ENCODE measurements at regions of chr10 and their contacts with region 1.

Region 1: DNA sequence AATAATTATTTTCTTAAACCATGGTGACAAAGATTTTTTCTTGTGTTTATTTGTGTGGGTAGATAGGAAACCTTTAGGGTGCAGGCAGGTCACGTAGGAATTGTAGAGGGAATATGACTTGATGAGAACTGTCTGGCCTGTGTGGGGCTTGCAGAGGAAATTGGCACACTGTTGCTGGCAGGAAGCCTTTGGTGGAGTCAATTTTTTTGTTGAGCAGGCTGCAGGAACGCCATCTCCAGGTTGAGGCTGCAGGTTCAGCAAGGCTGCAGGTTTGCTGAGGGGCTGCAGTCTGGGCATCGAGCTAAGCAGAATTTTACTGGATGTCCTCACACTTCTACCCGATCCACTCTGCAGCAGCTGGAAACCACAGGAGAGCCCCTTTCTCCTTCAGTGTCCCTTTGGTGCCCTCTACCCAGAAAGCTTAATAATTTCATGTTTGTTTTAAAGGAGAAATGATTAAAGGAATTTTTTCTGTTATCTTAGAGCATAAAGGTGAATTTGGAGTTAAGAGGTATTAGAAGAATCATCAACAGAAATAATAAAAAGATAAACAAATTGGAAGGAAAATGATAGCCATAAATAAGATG is 37.0 kb downstream of the TBC1D12 start:
- DNase-seq: no peak
- ATAC-seq: no peak
- H3K4me3 ChIP-seq: no peak overlapping the region
- H3K27ac ChIP-seq: no peak overlapping the region
- H3K4me1 ChIP-seq: peaks cover 6 to 13% of the 10 kb centered on the region in 2 donors
- H3K27me3 ChIP-seq: no peaks in the 10 kb centered on the region
- CTCF ChIP-seq: no peak
- POLR2A ChIP-seq: no peak

Region 2: GRCh38 chr10:94108200-94108599 is 331.2 kb before region 1 on chr10:
- in situ Hi-C with region 1: no loop called
- intact Hi-C with region 1: no loop called
- DNase-seq: no peak
- ATAC-seq: no peak
- H3K4me3 ChIP-seq: no peak overlapping the region
- H3K27ac ChIP-seq: no peak overlapping the region
- H3K4me1 ChIP-seq: peaks cover under 1 to 7% of the 10 kb centered on the region in 2 donors
- H3K27me3 ChIP-seq: no peaks in the 10 kb centered on the region
- CTCF ChIP-seq: no peak
- POLR2A ChIP-seq: no peak

Region 3: GRCh38 chr10:94279835-94280709 is 159.3 kb before region 1 on chr10:
- in situ Hi-C with region 1: no loop called
- intact Hi-C with region 1: loop called (anchors 10 kb)
- DNase-seq: no peak
- ATAC-seq: peak; percentile 47 to 82
- H3K4me3 ChIP-seq: no peak overlapping the region
- H3K27ac ChIP-seq: no peak overlapping the region
- H3K4me1 ChIP-seq: peaks cover 5 to 6% of the 10 kb centered on the region in 2 donors
- H3K27me3 ChIP-seq: no peaks in the 10 kb centered on the region
- CTCF ChIP-seq: peak; percentile 69 to 89 (median 72)
- POLR2A ChIP-seq: no peak

Region 4: DNA sequence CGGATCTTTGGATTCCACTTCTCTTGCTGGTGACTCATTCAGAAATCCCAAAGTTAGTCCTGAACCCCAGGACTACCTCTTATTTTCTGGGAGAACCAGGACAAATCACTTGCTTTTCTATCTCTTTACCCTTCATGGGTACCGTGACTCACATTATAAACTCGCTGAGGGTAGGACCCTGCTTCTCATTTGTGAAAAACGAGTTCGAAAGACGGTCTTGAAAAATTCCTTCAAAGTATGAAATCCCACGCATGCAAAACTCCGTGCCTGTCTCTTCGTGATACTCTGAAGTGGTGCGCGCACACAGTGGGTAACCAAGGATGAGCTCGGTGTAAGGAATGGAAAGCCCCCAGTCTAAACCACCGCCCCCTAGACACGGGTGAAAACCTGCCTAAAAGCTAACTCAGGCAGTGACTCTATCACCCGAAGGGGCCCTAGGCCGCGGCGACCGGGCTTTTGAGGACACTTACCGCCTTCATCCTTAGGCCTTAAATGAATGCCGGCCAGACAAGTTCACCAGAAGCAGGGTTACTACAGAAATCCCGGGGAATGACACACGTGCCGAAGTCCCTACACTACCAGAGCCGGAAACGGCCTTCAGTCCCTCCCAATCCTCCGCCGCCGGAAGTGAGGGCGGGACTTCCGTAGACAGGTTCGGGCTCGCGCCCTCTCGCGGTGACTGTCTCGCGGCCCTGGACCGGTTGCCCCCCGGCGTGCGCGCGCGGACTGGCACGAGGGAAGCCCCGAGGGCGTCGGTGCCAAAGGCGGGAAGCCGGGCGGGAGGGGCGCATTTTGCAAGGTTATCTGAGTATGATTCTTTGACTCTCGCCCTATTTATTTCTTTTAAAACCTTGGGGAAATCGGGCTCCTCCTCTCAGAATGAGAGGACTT is 76.8 kb before region 1 on chr10 and contains the start of gene NOC3L:
- in situ Hi-C with region 1: loop called in 1 of 4 experiments (anchors 10 kb)
- intact Hi-C with region 1: loop called (anchors 1 kb)
- DNase-seq: peak; percentile 86 to 92
- ATAC-seq: peak; percentile 98 to 99
- H3K4me3 ChIP-seq: peak within 1 kb of the TSS; percentile 60 to 88 (median 78)
- H3K27ac ChIP-seq: peak within 1 kb of the TSS; percentile 72 to 85 (median 78)
- H3K4me1 ChIP-seq: peaks cover 16 to 17% of the 10 kb centered on the region in 2 donors
- H3K27me3 ChIP-seq: no peaks in the 10 kb centered on the region
- CTCF ChIP-seq: peak; percentile 60 to 87 (median 82)
- POLR2A ChIP-seq: no peak
- total RNA-seq, gene NOC3L: 10.3 to 14.5 (median 12.5) TPM

Region 5: GRCh38 chr10:94370501-94370900 is 68.9 kb before region 1 on chr10:
- in situ Hi-C with region 1: loop called in 2 of 4 experiments (anchors 5 to 10 kb)
- intact Hi-C with region 1: no loop called
- DNase-seq: no peak
- ATAC-seq: no peak
- H3K4me3 ChIP-seq: no peak overlapping the region
- H3K27ac ChIP-seq: no peak overlapping the region
- H3K4me1 ChIP-seq: no peaks in the 10 kb centered on the region
- H3K27me3 ChIP-seq: no peaks in the 10 kb centered on the region
- CTCF ChIP-seq: no peak
- POLR2A ChIP-seq: no peak

Region 6: DNA sequence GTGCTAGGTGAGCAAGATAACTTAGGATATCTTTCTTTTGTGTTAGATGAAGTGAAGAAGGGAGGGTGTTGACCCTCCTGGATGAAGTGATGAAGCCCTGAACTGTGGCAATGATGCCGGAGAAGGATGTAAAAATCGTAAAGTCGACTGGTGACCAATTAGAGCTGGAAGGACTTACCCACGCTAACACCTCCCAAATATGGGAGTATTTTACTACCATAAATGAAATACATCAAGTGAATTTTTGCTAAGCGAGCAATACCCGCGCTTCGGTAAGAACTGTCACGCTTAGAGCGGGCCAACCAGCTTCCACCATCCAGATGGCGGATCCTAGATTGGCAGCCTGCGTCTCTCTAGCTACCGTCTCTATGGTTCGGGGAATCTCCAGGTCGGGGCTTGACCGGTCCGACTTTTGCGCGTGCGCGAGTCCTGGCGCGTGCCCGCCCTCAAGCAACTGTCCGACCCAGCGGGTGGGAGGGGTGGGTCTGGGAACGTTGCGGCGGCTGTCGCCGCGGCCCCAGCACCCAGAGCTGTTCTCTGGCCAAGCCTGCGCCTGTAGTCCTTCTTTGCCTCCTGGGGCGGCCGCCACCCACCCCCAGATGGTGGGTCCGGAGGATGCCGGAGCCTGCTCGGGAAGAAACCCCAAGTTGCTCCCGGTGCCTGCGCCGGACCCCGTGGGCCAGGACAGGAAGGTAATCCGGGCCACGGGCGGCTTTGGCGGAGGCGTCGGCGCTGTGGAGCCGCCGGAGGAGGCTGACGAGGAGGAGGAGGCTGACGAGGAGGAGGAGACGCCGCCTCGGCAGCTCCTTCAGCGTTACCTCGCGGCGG is 37.1 kb before region 1 on chr10 and contains the start of gene TBC1D12:
- in situ Hi-C with region 1: no loop called
- intact Hi-C with region 1: loop called (anchors 5 kb)
- DNase-seq: peak; percentile 91 to 94
- ATAC-seq: peak; percentile 90 to 93
- H3K4me3 ChIP-seq: peak within 1 kb of the TSS; percentile 70 to 95 (median 82)
- H3K27ac ChIP-seq: peak within 1 kb of the TSS; percentile 87 to 97 (median 90)
- H3K4me1 ChIP-seq: peaks cover 21% of the 10 kb centered on the region in 2 donors
- H3K27me3 ChIP-seq: peaks cover 0 to 6% (median 3%) of the 10 kb centered on the region in 3 donors
- CTCF ChIP-seq: no peak
- POLR2A ChIP-seq: peak; percentile 78 to 82
- total RNA-seq, gene TBC1D12: 7.4 to 11.4 (median 7.8) TPM